ENCODE measurements at regions of chr9 and their contacts with region 1.

Region 1: GRCh38 chr9:37800631-37801286 is at the start of gene DCAF10:
- DNase-seq: peak; percentile 98
- H3K4me3 Mint-ChIP-seq: peak within 1 kb of the TSS; percentile 94
- H3K27ac Mint-ChIP-seq: peak within 1 kb of the TSS; percentile 88
- H3K4me1 Mint-ChIP-seq: peaks cover 29% of the 10 kb centered on the region
- H3K27me3 Mint-ChIP-seq: no peaks in the 10 kb centered on the region
- total RNA-seq, gene DCAF10: 14.5 and 17.8 TPM in 2 replicates

Region 2: GRCh38 chr9:37753489-37754190 is 47.1 kb before region 1 on chr9 and contains the start of gene TRMT10B:
- intact Hi-C with region 1: loop called (anchors 2 kb)
- DNase-seq: peak; percentile 92
- H3K4me3 Mint-ChIP-seq: peak within 1 kb of the TSS; percentile 99
- H3K27ac Mint-ChIP-seq: peak within 1 kb of the TSS; percentile 97
- H3K4me1 Mint-ChIP-seq: peaks cover 22% of the 10 kb centered on the region
- H3K27me3 Mint-ChIP-seq: no peaks in the 10 kb centered on the region
- total RNA-seq, gene TRMT10B: 12.4 and 13.2 TPM in 2 replicates

Region 3: DNA sequence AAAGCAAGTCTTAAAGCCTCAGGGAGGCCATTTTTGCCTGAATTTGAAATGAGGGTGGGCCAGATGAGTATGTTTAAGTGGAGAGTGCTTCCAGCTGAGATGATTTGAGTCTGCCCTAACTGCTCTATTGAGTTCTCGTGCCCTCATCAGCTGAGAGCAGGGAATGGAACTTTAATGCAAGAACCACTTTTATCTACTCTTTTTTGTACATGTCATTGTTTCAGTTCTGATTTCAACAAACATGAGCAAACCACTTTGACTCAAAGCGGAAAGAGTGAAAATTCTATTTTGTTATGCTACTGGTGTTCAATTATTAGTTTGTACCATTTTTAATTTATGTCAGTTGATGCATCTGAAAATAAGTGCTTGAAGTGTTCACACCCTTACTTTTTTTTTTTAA is 35.6 kb after region 1 on chr9:
- intact Hi-C with region 1: loop called (anchors 5 kb)
- DNase-seq: no peak
- H3K4me3 Mint-ChIP-seq: no peak overlapping the region
- H3K27ac Mint-ChIP-seq: peak overlapping the region; percentile 54
- H3K4me1 Mint-ChIP-seq: peaks cover 14% of the 10 kb centered on the region
- H3K27me3 Mint-ChIP-seq: no peaks in the 10 kb centered on the region